ENCODE measurements at regions of chr1 and their contacts with region 1.

Region 1: DNA sequence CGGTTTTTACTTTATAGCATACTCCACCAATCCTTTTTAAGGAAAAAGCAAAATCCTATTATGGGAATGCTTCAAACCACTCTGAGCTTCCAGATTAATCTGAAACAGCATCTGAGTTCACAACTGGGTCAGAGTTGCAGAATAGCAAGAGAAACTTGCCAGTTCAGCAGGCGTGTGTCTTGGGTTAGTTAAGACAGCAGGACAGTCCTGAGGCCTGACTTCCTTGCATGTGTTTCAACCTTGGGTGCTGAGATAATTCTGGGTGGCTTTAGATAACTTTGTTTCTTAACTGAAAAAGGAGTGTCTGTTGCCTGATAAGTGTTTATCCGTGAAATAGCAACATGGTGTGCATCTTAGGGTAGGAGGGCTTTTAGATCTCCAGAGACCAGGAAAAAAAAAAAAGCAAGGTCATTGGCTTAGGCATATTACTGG is 169.2 kb downstream of the DHRS3 start:
- DNase-seq: no peak
- H3K4me3 Mint-ChIP-seq: peak overlapping the region; percentile 53
- H3K27ac Mint-ChIP-seq: peak overlapping the region; percentile 84
- H3K4me1 Mint-ChIP-seq: peaks cover 83% of the 10 kb centered on the region
- H3K27me3 Mint-ChIP-seq: peaks cover 10% of the 10 kb centered on the region

Region 2: DNA sequence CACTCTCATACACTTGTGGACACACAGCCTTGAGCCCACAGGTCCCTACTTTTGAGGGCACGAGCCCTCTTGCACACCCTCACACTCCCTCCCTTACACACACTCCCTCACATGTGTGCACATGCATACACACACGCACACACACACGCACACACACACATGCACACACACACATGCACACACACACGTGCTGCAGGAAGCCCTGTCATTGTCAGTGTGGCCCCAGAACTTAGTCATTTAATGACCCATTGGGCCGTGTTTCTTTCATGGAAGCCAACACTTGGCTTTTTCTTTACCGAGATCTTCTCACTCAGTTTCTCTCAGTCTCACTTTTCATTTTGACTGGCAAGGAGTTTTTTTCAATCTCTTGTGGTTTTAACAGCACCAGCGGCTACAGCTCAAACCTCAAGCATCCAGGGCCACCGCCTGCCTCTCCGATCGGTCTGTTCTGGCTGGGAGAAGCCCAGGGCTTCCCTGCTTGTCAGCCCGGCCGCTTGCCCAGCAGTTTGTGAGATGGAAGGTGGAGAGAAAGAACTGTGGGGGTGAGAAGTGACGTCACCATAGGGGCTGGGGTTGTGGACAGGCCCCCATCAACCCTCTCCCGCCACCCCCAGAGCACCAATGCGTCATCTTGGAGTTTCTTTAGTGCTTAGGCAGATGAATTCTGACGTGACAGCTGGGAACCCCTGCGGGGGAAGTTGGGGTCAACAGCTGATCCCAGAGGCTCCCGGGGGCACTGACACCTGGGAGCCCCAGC is 401.5 kb before region 1 on chr1:
- intact Hi-C with region 1: loop called (anchors 5 kb)
- DNase-seq: peak; percentile 71
- H3K4me3 Mint-ChIP-seq: no peak overlapping the region
- H3K27ac Mint-ChIP-seq: no peak overlapping the region
- H3K4me1 Mint-ChIP-seq: peaks cover 18% of the 10 kb centered on the region
- H3K27me3 Mint-ChIP-seq: no peaks in the 10 kb centered on the region

Region 3: DNA sequence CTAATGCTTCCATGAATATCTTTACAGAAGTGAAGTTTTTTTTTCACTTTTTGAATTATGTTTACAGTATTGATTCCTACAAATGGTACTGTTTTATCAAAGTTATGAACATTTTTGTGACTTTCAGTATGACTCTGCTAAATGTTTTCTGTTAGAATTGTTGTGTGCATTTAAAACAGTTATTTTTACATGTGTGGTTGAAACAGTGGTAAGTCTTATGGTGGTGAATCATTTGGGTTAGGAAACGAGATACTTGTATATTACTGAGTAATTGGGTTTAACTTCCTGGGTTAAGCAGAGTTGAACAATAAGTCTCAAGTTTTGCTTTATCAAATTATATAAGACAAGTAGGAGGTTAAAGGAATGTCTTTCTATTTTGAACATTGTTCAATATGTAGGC is 152.1 kb before region 1 on chr1:
- intact Hi-C with region 1: loop called (anchors 1 kb)
- DNase-seq: no peak
- H3K4me3 Mint-ChIP-seq: peak overlapping the region; percentile 50
- H3K27ac Mint-ChIP-seq: peak overlapping the region; percentile 72
- H3K4me1 Mint-ChIP-seq: peaks cover 46% of the 10 kb centered on the region
- H3K27me3 Mint-ChIP-seq: no peaks in the 10 kb centered on the region

Region 4: DNA sequence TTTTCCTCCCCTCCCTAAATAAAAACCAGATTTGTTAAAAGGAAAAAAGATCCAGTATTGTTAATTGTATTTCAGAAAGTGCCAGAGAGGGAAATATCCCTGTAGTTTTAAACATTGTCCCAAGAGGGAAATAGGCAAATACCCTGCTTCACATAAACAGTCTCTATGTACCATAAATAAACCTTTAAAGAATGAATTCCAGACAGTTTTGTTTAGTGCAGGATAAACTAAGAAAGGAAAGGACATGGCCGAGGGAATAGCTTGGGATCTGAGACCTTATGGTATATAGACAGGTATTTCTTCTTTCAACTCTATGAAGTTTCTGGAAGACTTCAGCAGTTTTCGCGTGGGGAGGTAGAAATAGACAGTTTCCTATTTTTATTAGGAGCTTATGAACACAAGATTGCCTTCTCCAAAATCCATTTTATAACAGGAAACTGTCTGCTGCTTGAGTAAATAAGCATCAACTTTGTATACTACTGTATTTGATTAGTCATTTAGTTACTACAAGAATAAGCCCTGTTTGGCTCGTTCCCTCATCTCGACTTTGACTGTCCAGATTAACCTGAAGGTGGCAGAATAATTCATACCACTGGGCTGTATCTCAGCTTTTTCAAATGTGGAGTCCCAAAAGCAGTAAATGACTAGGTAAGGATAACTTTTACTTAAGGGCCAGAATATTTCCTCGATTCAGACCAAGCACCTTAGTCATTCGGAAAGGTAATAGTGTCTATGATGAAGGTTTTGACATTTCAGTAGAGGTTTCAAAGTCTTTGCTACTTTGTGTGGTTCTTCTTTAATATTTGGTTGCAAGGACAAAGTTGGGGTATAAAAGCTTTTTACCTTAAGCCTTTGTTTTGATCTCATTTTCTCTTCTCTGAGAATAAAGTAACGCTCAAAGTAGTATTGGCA is 41.5 kb before region 1 on chr1:
- intact Hi-C with region 1: loop called (anchors 2 kb)
- DNase-seq: no peak
- H3K4me3 Mint-ChIP-seq: no peak overlapping the region
- H3K27ac Mint-ChIP-seq: no peak overlapping the region
- H3K4me1 Mint-ChIP-seq: peaks cover 26% of the 10 kb centered on the region
- H3K27me3 Mint-ChIP-seq: no peaks in the 10 kb centered on the region

Region 5: GRCh38 chr1:12467570-12468286 is 19.0 kb after region 1 on chr1:
- intact Hi-C with region 1: loop called (anchors 1 kb)
- DNase-seq: no peak
- H3K4me3 Mint-ChIP-seq: no peak overlapping the region
- H3K27ac Mint-ChIP-seq: peak overlapping the region; percentile 89
- H3K4me1 Mint-ChIP-seq: peaks cover 39% of the 10 kb centered on the region
- H3K27me3 Mint-ChIP-seq: no peaks in the 10 kb centered on the region

Region 6: GRCh38 chr1:12511516-12512468 is 63.0 kb after region 1 on chr1:
- intact Hi-C with region 1: loop called (anchors 1 kb)
- DNase-seq: no peak
- H3K4me3 Mint-ChIP-seq: peak overlapping the region; percentile 87
- H3K27ac Mint-ChIP-seq: peak overlapping the region; percentile 100
- H3K4me1 Mint-ChIP-seq: peaks cover 60% of the 10 kb centered on the region
- H3K27me3 Mint-ChIP-seq: no peaks in the 10 kb centered on the region

Region 7: GRCh38 chr1:12525311-12526181 is 76.8 kb after region 1 on chr1:
- intact Hi-C with region 1: no loop called
- DNase-seq: no peak
- H3K4me3 Mint-ChIP-seq: no peak overlapping the region
- H3K27ac Mint-ChIP-seq: peak overlapping the region; percentile 67
- H3K4me1 Mint-ChIP-seq: peaks cover 14% of the 10 kb centered on the region
- H3K27me3 Mint-ChIP-seq: no peaks in the 10 kb centered on the region

Region 8: GRCh38 chr1:12604114-12604874 is 155.5 kb after region 1 on chr1:
- intact Hi-C with region 1: loop called (anchors 1 kb)
- DNase-seq: peak; percentile 49
- H3K4me3 Mint-ChIP-seq: peak overlapping the region; percentile 47
- H3K27ac Mint-ChIP-seq: peak overlapping the region; percentile 64
- H3K4me1 Mint-ChIP-seq: peaks cover 41% of the 10 kb centered on the region
- H3K27me3 Mint-ChIP-seq: peaks cover 4% of the 10 kb centered on the region

Region 9: GRCh38 chr1:12739613-12740012 is 290.9 kb after region 1 on chr1:
- intact Hi-C with region 1: no loop called
- DNase-seq: no peak
- H3K4me3 Mint-ChIP-seq: no peak overlapping the region
- H3K27ac Mint-ChIP-seq: no peak overlapping the region
- H3K4me1 Mint-ChIP-seq: no peaks in the 10 kb centered on the region
- H3K27me3 Mint-ChIP-seq: peaks cover 9% of the 10 kb centered on the region